ENCODE measurements at regions of chr1 and their contacts with region 1.

Region 1: DNA sequence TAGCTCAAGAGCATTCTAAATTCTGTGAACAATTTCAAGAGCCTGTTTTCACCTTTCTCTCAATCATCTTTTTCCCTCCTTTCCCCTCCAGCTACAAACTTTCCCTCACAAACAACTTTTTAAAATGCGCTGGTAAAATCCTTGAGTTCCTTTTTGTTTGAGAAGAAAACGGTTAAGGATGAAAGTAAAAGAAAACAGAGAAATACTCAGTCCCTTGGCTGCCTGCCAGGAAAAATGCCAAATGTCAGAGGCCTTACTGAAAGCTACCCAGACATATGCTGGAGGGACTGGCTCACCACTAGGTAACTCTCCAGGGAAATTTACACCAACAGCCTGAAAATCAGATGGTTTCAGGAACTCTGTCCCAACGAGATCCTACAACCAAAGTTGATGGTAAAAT is 11.0 kb upstream of the SERBP1 start:
- DNase-seq: peak; percentile 59 to 81 (median 77)
- H3K4me3 ChIP-seq: peak overlapping the region in 2 of 7 experiments; percentile 21 to 40
- H3K27ac ChIP-seq: peak overlapping the region in 1 of 2 experiments; percentile 45
- H3K4me1 ChIP-seq: peaks cover 7 to 11% (median 9%) of the 10 kb centered on the region in 4 experiments
- H3K27me3 ChIP-seq: no peaks in the 10 kb centered on the region

Region 2: GRCh38 chr1:67430352-67431155 is 10.6 kb before region 1 on chr1 and contains the start of gene SERBP1:
- CTCF ChIA-PET with region 1: interaction called, 11 read pairs
- POLR2A ChIA-PET with region 1: no interaction called
- DNase-seq: peak; percentile 98 to 99 (median 98)
- H3K4me3 ChIP-seq: peak within 1 kb of the TSS; percentile 79 to 98 (median 95)
- H3K27ac ChIP-seq: peak within 1 kb of the TSS; percentile 80 to 92
- H3K4me1 ChIP-seq: peaks cover 23 to 60% (median 38%) of the 10 kb centered on the region in 4 experiments
- H3K27me3 ChIP-seq: no peaks in the 10 kb centered on the region

Region 3: DNA sequence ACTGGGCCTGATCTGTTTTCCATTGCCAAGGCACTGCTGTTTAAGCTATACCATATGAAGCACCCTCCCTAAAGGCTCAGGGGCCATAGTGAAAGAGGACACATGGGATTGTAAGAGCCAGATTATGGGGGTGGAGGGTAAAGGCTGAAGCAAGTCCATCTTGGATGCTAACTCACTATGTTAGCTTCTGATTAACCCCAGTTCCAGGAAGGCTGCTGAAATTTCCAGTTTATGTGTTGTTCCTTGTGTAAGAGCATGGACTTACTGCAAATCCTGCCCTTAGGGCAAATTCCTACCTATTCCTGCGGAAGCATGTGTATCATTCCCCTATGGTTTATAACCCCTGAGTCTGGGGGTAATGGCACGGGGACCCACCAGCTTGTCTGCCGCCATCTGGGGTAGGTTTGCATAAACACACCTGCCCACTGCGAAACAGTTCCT is 80.8 kb after region 1 on chr1:
- CTCF ChIA-PET with region 1: no interaction called
- POLR2A ChIA-PET with region 1: no interaction called
- DNase-seq: no peak
- H3K4me3 ChIP-seq: no peak overlapping the region
- H3K27ac ChIP-seq: no peak overlapping the region
- H3K4me1 ChIP-seq: peaks cover 0 to 5% (median 0%) of the 10 kb centered on the region in 4 experiments
- H3K27me3 ChIP-seq: no peaks in the 10 kb centered on the region

Region 4: DNA sequence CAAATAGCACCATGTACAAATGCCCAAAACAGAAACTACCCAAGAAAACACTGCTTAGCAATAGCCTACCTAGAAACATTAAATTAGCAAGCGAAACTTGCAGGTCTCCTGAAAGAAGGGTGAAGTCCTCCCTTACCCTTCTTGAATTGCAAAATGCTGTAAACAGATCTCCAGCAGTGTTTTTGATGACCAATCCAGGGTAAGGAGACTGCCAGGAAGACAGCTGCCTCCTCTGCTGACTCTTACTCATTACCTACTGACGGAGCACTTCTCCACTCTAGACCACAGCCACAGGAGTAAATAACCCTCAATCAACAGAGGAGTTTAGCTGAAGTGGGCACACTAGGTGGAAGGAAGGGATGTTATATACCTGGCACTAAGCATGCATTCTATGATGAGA is 211.6 kb after region 1 on chr1:
- CTCF ChIA-PET with region 1: no interaction called
- POLR2A ChIA-PET with region 1: no interaction called
- DNase-seq: peak in 2 of 3 donors; percentile 77 to 79
- H3K4me3 ChIP-seq: no peak overlapping the region
- H3K27ac ChIP-seq: no peak overlapping the region
- H3K4me1 ChIP-seq: peaks cover 0 to 7% (median 4%) of the 10 kb centered on the region in 4 experiments
- H3K27me3 ChIP-seq: no peaks in the 10 kb centered on the region

Measured in common myeloid progenitor, CD34-positive (primary cell).